Dorsolateral prefrontal cortex (tissue), 120 donors: ENCODE measurements at regions of chr22 and their contacts with region 1.

Region 1: GRCh38 chr22:27632451-27633295 is 168.9 kb downstream of the MN1 start:
- DNase-seq: peak in 1 of 10 donors; percentile 23
- H3K4me3 ChIP-seq: no peak overlapping the region
- H3K27ac ChIP-seq: no peak overlapping the region
- H3K27me3 ChIP-seq: no peaks in the 10 kb centered on the region
- CTCF ChIP-seq: no peak

Region 2: GRCh38 chr22:27489176-27489675 is 143.4 kb before region 1 on chr22:
- intact Hi-C with region 1: loop called in 1 of 2 experiments (anchors 10 kb)
- DNase-seq: no peak
- H3K4me3 ChIP-seq: no peak overlapping the region
- H3K27ac ChIP-seq: no peak overlapping the region
- H3K27me3 ChIP-seq: peaks cover 0 to 25% (median 0%) of the 10 kb centered on the region in 45 donors
- CTCF ChIP-seq: no peak